ENCODE measurements at regions of chr5 and their contacts with region 1.

Region 1: DNA sequence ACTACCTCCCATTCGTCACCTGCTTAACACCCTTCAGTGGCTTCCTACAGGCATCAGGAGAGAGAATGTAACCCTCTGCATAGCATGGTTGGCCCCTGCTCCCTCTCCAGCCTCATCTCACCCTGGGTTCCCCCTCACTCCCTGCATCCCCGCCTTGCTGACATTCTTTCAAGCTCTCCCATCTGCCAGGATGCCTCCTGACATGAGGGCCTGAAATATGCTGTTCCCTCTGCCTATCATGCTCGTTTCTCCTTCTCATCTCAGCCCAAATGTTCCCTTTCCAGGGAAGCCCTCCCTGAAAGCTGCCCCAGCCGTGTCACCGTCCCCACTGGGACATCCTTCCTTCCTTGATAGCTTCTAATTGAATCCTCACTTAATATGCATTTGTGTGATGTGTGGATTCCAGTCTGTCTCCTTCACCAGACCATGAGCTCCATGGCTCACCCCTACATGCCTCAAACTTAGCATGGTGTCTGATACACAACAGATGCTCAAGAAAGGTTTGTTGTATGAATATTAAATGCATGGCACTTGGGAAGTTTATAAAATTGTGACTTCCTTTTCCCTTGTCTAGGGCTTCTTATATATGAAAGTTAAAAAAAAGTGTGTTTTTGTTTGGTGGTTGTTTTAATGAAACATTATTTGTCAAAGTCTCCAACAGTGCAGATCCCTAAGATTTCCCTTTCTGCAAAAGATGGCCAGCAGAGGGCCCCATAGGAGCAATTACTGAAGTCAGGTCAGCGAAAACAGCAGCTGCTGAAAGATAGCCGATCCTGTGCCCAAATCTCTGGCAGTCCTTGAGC is 7.3 kb upstream of the C5orf58 start:
- DNase-seq: peak; percentile 65 to 73 (median 69)
- H3K4me3 ChIP-seq: no peak overlapping the region
- H3K4me3 Mint-ChIP-seq: peak overlapping the region in 1 of 8 donors; percentile 14
- H3K27ac ChIP-seq: no peak overlapping the region
- H3K27ac Mint-ChIP-seq: peak overlapping the region in 3 of 7 donors; percentile 29 to 71 (median 70)
- H3K4me1 ChIP-seq: no peaks in the 10 kb centered on the region
- H3K4me1 Mint-ChIP-seq: peaks cover 3 to 4% (median 3%) of the 10 kb centered on the region in 4 donors
- H3K27me3 ChIP-seq: no peaks in the 10 kb centered on the region
- H3K27me3 Mint-ChIP-seq: no peaks in the 10 kb centered on the region

Region 2: DNA sequence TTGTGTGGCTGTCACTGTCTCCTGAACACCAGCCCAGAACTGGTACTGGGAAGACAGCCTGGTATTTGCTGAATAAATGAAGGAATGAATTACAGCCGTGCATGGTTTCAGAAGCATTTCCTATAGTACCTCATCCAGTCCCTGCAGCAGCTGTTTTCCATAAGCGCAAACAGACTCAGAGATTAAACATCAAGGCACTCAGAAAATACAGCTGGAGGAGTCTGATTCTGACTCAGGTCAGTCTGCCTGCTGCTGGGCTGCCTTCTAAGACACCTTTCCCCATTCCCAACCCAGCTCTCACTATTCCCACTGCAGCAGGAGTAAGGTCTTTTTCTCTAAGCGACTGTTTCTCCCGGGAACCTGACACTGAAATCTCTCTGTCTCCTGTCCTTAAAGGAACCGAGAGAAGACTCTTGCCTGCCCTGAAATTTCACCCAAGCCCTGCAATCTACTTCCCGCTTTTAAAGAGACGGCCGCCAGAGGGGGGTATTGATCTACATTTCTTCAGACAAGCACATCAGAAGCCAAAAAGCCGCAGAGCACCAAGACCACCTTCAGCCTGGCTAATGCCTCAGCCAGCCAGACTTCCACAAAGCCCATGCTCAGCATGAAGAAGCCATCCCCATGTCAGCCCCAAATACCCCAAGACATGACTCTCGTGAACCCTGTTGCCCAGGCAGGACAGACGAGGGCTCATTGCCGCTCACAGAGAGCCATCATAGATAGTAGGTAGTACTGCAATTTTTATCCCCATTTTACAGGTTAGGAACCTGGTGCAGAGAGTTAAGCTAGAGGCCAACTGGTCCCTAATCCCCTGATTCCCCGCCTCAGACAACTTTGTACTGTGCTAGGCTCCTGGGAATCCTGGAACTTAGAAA is 125.2 kb before region 1 on chr5:
- CTCF ChIA-PET with region 1: interaction called, 8 read pairs
- POLR2A ChIA-PET with region 1: no interaction called
- intact Hi-C with region 1: loop called (anchors 10 kb)
- DNase-seq: peak; percentile 51 to 66 (median 56)
- H3K4me3 ChIP-seq: no peak overlapping the region
- H3K4me3 Mint-ChIP-seq: no peak overlapping the region
- H3K27ac ChIP-seq: no peak overlapping the region
- H3K27ac Mint-ChIP-seq: peak overlapping the region in 2 of 7 donors; percentile 44 to 62
- H3K4me1 ChIP-seq: no peaks in the 10 kb centered on the region
- H3K4me1 Mint-ChIP-seq: peaks cover 0 to 1% (median 0%) of the 10 kb centered on the region in 4 donors
- H3K27me3 ChIP-seq: no peaks in the 10 kb centered on the region
- H3K27me3 Mint-ChIP-seq: peaks cover 1 to 7% of the 10 kb centered on the region in 2 donors

Region 3: DNA sequence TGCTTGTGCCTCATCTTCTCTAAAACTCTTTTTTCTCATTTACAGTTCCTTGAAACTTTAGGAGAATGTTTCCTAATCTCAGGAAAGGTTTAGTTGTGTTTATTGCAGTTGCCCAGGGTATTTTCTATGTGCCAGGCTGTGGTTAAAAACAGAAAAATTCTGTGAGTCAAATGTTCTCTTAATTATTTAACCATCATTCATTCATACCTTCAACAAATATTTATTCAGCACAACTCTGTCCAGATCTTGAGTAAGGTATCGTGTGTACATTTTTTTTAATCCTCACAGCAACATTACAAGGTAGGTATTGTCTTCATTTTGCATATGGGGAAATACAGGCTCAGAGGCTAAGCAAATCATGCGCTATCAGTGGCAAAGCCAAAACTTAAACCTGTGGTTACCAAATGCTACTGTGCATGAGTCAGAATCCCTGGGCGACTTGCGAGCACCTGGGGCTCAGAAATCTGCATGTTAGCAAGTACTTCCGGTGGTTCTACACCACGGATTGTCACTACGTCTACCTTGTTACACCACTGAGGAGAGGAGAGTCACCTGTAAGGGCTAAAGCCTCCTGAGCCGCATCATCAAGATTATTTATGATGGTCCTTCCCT is 28.4 kb after region 1 on chr5:
- CTCF ChIA-PET with region 1: interaction called, 48 read pairs
- POLR2A ChIA-PET with region 1: no interaction called
- intact Hi-C with region 1: loop called (anchors 1 kb)
- DNase-seq: peak; percentile 72 to 93 (median 79)
- H3K4me3 ChIP-seq: no peak overlapping the region
- H3K4me3 Mint-ChIP-seq: peak overlapping the region in 7 of 8 donors; percentile 2 to 78 (median 11)
- H3K27ac ChIP-seq: peak overlapping the region; percentile 60
- H3K27ac Mint-ChIP-seq: peak overlapping the region; percentile 82 to 97 (median 92)
- H3K4me1 ChIP-seq: peaks cover 51% of the 10 kb centered on the region
- H3K4me1 Mint-ChIP-seq: peaks cover 27 to 59% (median 42%) of the 10 kb centered on the region in 4 donors
- H3K27me3 ChIP-seq: no peaks in the 10 kb centered on the region
- H3K27me3 Mint-ChIP-seq: no peaks in the 10 kb centered on the region

Region 4: DNA sequence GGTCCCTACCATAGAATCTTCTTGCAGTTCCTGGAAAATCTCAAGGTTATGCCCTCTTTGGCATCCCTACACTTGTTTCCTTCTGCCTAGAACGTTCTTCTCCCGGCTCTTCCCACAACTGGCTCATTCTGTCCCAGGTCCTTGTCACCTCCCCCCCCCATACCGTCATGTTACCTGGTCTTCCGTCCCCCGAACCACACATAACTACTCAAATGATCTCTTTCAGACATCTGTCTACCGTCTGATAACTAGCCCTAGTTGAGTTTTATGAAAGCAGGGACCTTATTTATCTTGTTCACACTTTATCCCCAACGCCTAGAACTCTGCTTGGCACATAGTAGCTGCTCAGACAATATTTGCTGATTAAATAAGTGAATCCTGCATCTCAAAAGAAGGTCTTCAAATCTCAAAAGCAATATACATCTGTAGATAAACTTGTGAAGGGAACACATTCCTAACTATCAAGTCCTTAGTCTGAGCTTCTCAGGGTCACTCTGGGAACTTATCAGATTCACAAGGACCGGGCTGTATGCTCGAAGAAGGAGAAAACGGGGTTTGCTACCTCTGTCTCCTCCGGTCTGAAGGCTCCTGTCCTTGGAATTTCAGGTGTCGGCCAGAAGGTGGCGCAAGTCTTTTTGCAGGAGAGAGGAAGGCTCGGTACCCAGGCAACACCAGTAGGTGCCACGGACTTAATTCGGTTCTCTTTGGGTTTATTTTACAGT is 42.1 kb after region 1 on chr5:
- CTCF ChIA-PET with region 1: interaction called, 85 read pairs
- POLR2A ChIA-PET with region 1: interaction called, 11 read pairs
- intact Hi-C with region 1: loop called (anchors 1 kb)
- DNase-seq: peak; percentile 80 to 83 (median 82)
- H3K4me3 ChIP-seq: peak overlapping the region in 1 of 2 donors; percentile 33
- H3K4me3 Mint-ChIP-seq: peak overlapping the region; percentile 41 to 86 (median 75)
- H3K27ac ChIP-seq: peak overlapping the region; percentile 66
- H3K27ac Mint-ChIP-seq: peak overlapping the region; percentile 90 to 100 (median 95)
- H3K4me1 ChIP-seq: peaks cover 94% of the 10 kb centered on the region
- H3K4me1 Mint-ChIP-seq: peaks cover 67 to 92% (median 81%) of the 10 kb centered on the region in 4 donors
- H3K27me3 ChIP-seq: no peaks in the 10 kb centered on the region
- H3K27me3 Mint-ChIP-seq: no peaks in the 10 kb centered on the region

Region 5: DNA sequence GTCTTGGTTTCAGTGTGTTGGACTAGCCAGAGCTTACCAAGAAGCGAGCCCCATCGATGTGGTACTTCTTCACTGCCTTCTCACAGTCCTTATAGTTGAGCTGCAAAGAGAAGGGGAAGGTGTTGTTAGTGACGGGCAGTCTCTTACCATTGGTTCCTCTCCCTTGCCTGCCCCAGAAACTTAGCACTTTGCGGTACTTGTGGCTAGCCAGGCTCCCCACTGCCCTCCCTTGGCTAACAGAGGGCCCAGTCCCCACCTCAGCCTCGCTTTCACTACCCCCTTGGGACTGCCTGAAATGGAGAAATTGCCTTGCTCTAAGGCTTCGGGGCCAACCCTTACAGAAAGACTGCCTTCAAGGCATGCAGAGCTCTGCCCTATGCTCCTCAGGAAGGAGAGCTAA is 67.7 kb after region 1 on chr5:
- CTCF ChIA-PET with region 1: interaction called, 19 read pairs
- POLR2A ChIA-PET with region 1: interaction called, 6 read pairs
- intact Hi-C with region 1: no loop called
- DNase-seq: peak in 4 of 5 donors; percentile 47 to 77 (median 50)
- H3K4me3 ChIP-seq: peak overlapping the region; percentile 33 to 97
- H3K4me3 Mint-ChIP-seq: peak overlapping the region; percentile 95 to 99 (median 98)
- H3K27ac ChIP-seq: peak overlapping the region; percentile 90
- H3K27ac Mint-ChIP-seq: peak overlapping the region; percentile 87 to 100 (median 96)
- H3K4me1 ChIP-seq: peaks cover 76% of the 10 kb centered on the region
- H3K4me1 Mint-ChIP-seq: peaks cover 59 to 100% (median 67%) of the 10 kb centered on the region in 4 donors
- H3K27me3 ChIP-seq: no peaks in the 10 kb centered on the region
- H3K27me3 Mint-ChIP-seq: no peaks in the 10 kb centered on the region

Region 6: DNA sequence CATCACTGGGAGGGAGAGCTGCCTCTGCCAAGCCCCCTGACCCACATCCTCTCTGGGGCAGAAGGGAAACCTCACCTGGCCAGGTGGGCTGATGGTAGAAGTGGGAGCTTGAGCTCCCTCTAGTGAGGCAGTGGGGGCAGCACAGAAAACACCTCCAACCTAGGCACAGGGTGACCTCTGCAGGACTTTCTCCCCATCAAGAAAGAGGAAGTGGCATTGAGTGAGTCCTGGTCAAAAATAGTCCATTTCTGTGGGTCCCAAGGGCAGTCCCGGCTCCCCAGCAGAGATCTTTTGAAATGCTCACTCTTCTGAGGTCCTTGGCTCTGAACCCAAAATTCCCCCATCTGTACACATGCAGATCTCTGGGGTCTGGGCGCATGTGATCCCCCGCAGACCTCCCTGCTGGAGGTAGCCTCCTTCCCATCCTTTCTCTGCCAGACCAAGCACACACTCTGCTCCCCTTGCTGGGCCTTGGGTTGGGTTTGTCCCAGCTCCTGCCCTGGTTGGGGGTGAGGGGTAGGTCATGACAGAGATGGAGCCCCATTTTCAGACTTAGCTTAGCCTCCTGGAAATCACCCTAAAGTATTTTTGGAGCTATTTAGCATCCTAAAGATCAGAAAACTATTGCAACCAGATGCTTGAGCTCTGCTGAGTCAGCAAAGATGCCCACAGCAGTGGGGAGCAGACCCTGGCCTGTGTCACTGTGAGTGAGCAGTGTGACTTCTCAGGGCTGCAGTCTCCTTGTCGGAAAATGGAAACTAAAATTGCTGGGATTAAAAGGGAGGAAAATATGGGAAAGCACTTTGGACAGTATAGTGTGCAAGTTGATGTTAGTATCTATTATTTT is 113.6 kb after region 1 on chr5:
- CTCF ChIA-PET with region 1: interaction called, 374 read pairs
- POLR2A ChIA-PET with region 1: interaction called, 35 read pairs
- intact Hi-C with region 1: loop called (anchors 1 kb)
- DNase-seq: peak; percentile 64 to 72 (median 70)
- H3K4me3 ChIP-seq: no peak overlapping the region
- H3K4me3 Mint-ChIP-seq: no peak overlapping the region
- H3K27ac ChIP-seq: peak overlapping the region; percentile 8
- H3K27ac Mint-ChIP-seq: peak overlapping the region in 5 of 7 donors; percentile 45 to 89 (median 56)
- H3K4me1 ChIP-seq: peaks cover 51% of the 10 kb centered on the region
- H3K4me1 Mint-ChIP-seq: peaks cover 0 to 39% (median 27%) of the 10 kb centered on the region in 4 donors
- H3K27me3 ChIP-seq: no peaks in the 10 kb centered on the region
- H3K27me3 Mint-ChIP-seq: no peaks in the 10 kb centered on the region

Region 7: DNA sequence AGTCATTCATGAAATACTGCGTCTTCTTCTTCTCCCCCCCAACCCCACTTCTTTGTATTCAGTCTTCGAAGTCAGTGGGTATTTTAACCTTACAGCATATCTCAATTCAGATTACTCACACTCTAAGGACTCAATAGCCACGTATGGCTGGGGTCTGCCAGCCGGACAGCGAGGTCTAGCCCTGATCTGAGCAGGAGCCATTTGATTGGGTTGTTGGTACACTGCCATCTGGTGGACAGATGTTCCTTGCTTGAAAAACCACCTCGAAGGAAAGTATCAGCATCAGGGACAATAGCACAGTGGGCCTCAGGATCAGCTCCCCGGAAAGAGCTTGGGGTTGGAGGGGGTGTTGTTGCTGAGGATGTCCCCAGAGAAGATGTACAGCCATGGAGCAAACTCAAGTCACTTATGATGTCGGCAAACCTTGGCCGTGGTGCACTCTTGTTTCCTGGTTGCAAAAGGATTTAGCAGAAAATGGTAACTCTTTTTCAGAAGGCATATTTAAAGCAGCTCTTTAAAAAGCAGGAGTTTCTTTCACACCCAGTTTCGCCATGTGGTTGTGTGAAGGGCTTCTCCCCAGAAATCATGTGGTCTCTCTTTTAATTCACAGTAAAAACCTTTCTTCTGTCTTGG is 195.4 kb after region 1 on chr5:
- CTCF ChIA-PET with region 1: interaction called, 21 read pairs
- POLR2A ChIA-PET with region 1: interaction called, 3 read pairs
- intact Hi-C with region 1: loop called (anchors 1 kb)
- DNase-seq: peak; percentile 45 to 54 (median 53)
- H3K4me3 ChIP-seq: no peak overlapping the region
- H3K4me3 Mint-ChIP-seq: no peak overlapping the region
- H3K27ac ChIP-seq: no peak overlapping the region
- H3K27ac Mint-ChIP-seq: peak overlapping the region in 1 of 7 donors; percentile 24
- H3K4me1 ChIP-seq: peaks cover 19% of the 10 kb centered on the region
- H3K4me1 Mint-ChIP-seq: peaks cover 18 to 25% (median 23%) of the 10 kb centered on the region in 4 donors
- H3K27me3 ChIP-seq: no peaks in the 10 kb centered on the region
- H3K27me3 Mint-ChIP-seq: peaks cover 4 to 7% of the 10 kb centered on the region in 2 donors

Measured in CD4-positive, alpha-beta memory T cell (primary cell).